ENCODE measurements at regions of chr6 and their contacts with region 1.

Region 1: GRCh38 chr6:159654483-159655098 is 38.5 kb downstream of the SOD2 start:
- DNase-seq: peak; percentile 39
- CTCF ChIP-seq: peak; percentile 53

Region 2: DNA sequence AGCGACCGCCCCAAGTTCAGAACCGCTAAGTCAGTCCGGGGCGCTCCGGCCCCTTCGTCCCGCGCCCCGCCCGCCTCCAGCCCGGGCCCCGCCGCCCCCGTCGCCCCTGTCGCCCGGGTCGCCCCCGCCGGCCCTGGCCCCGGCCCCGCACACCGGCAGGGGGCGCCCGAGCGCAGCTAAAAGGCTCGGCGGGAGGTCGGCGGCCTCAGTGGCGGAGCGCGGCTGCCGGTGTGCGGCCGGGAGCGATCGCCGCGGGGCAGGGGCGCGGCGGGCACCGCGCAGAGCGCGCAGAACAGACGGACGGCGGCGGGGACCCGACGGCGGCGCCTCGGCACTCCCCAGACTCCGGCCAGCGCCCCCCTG is 485.4 kb before region 1 on chr6 and contains the start of gene FNDC1:
- CTCF ChIA-PET with region 1: interaction called, 44 read pairs
- POLR2A ChIA-PET with region 1: no interaction called
- DNase-seq: peak; percentile 82
- CTCF ChIP-seq: peak; percentile 60

Region 3: DNA sequence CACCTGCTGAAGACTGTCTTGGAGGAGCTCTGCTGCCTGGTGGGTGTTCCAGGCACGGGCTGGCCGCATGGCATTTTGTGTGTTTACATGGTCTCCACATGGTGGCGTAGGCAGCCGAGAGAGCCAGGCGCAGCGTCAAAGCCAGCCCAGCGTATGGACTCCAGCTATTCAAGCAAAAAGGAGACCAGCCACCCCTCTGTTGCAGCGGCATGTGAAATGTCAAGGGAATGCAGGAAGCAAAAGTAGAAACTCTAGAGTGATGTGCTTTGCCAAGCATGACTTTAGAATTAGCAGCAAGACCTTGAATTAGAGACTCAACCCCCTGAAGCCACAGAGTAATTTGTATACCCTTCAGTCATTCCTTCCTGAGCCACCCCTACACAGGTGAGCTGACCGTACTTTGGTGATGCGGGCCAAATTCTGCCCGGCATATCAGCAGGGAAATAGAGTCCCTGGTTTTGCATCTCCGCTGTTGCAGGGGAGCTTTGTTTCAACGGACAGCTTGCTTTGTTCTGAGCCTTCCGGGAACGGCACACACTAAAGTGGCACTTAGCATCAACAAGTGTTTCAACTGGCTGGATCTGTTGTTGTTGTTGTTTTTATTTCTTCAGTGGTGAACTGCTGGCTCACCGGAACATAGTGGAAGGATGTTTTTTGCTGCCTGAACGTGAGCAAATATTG is 436.9 kb before region 1 on chr6:
- CTCF ChIA-PET with region 1: interaction called, 19 read pairs
- POLR2A ChIA-PET with region 1: no interaction called
- DNase-seq: peak; percentile 67
- CTCF ChIP-seq: peak; percentile 54

Region 4: DNA sequence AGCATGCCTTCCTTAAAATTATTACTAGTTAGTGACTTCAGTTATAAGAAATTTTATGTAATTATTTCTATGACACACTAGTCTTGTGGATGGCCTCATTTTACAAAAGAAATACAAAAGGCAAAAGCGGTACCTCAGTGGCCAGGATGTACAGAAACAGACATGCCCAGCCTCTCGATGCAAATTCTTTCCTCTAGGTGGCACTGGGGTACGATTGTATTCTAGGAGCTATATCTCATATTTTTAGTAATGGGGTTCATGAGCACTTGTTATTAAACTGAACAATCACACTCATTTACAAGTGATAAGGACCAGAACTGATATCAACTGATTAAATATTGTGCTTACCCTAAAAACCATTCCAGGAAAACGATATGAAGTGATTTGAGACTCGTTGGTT is 21.4 kb before region 1 on chr6:
- CTCF ChIA-PET with region 1: interaction called, 15 read pairs
- POLR2A ChIA-PET with region 1: no interaction called
- DNase-seq: no peak
- CTCF ChIP-seq: peak; percentile 21

Region 5: GRCh38 chr6:159665868-159666635 is 11.5 kb after region 1 on chr6:
- CTCF ChIA-PET with region 1: interaction called, 19 read pairs
- POLR2A ChIA-PET with region 1: no interaction called
- DNase-seq: no peak
- CTCF ChIP-seq: no peak

Measured in GM10248 (cell line).